ENCODE measurements at regions of chr5 and their contacts with region 1.

Region 1: GRCh38 chr5:179732417-179732917 is at the start of gene MAML1:
- DNase-seq: peak; percentile 99 to 100 (median 99)
- H3K4me3 ChIP-seq: peak within 1 kb of the TSS; percentile 53 to 62
- H3K4me3 Mint-ChIP-seq: peak within 1 kb of the TSS; percentile 92 to 97 (median 95)
- H3K27ac ChIP-seq: peak within 1 kb of the TSS; percentile 96
- H3K27ac Mint-ChIP-seq: peak within 1 kb of the TSS; percentile 92 to 99 (median 96)
- H3K4me1 ChIP-seq: peaks cover 44% of the 10 kb centered on the region
- H3K4me1 Mint-ChIP-seq: peaks cover 25 to 51% (median 37%) of the 10 kb centered on the region in 4 donors
- H3K27me3 ChIP-seq: no peaks in the 10 kb centered on the region
- H3K27me3 Mint-ChIP-seq: no peaks in the 10 kb centered on the region
- total RNA-seq, gene MAML1: 52.4 to 56.5 TPM

Region 2: GRCh38 chr5:179559284-179560252 is 172.9 kb before region 1 on chr5:
- CTCF ChIA-PET with region 1: no interaction called
- POLR2A ChIA-PET with region 1: interaction called, 4 read pairs
- intact Hi-C with region 1: loop called (anchors 10 kb)
- DNase-seq: peak; percentile 85 to 97 (median 92)
- H3K4me3 ChIP-seq: peak overlapping the region; percentile 50 to 64
- H3K4me3 Mint-ChIP-seq: peak overlapping the region; percentile 84 to 98 (median 90)
- H3K27ac ChIP-seq: peak overlapping the region; percentile 62
- H3K27ac Mint-ChIP-seq: peak overlapping the region; percentile 80 to 96 (median 93)
- H3K4me1 ChIP-seq: peaks cover 11% of the 10 kb centered on the region
- H3K4me1 Mint-ChIP-seq: peaks cover 16 to 28% (median 24%) of the 10 kb centered on the region in 4 donors
- H3K27me3 ChIP-seq: no peaks in the 10 kb centered on the region
- H3K27me3 Mint-ChIP-seq: no peaks in the 10 kb centered on the region

Region 3: GRCh38 chr5:179795863-179796833 is 63.7 kb after region 1 on chr5:
- CTCF ChIA-PET with region 1: interaction called, 4 read pairs
- POLR2A ChIA-PET with region 1: interaction called, 16 read pairs
- intact Hi-C with region 1: loop called (anchors 2 kb)
- DNase-seq: peak; percentile 61 to 77 (median 68)
- H3K4me3 ChIP-seq: peak overlapping the region; percentile 23 to 69
- H3K4me3 Mint-ChIP-seq: peak overlapping the region; percentile 50 to 79 (median 64)
- H3K27ac ChIP-seq: peak overlapping the region; percentile 44
- H3K27ac Mint-ChIP-seq: peak overlapping the region in 6 of 7 donors; percentile 11 to 89 (median 57)
- H3K4me1 ChIP-seq: peaks cover 25% of the 10 kb centered on the region
- H3K4me1 Mint-ChIP-seq: peaks cover 11 to 51% (median 27%) of the 10 kb centered on the region in 4 donors
- H3K27me3 ChIP-seq: no peaks in the 10 kb centered on the region
- H3K27me3 Mint-ChIP-seq: no peaks in the 10 kb centered on the region